Sciatic nerve (tissue), 2 donors: ENCODE measurements at regions of chr4 and their contacts with region 1.

Region 1: DNA sequence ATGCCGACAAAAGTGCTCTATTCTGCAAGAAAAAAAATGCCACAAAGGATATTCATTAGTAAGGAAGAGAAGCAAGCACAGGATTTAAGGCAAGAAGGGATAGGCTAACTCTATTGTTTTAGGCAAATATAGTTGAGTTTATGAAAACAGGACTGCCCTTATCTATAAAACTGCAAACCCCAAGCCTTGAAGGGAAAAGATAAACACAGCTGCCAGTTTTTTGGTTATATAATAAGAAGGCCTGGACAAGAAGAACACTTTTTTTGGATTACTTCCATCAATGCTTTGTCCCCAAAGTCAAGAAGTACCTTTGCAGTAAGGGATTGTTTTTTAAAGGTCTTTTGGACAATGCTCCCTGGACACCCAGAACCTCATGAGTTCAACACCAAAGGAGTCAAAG is 45.4 kb upstream of the WWC2 start:
- DNase-seq: no peak
- ATAC-seq: no peak

Region 2: GRCh38 chr4:182604953-182605352 is 448.7 kb before region 1 on chr4:
- intact Hi-C with region 1: loop called (anchors 5 kb)
- DNase-seq: no peak
- ATAC-seq: no peak